ENCODE measurements at regions of chr12 and their contacts with region 1.

Region 1: GRCh38 chr12:56206457-56207166 is 15.1 kb downstream of the RNF41 start:
- DNase-seq: no peak
- ATAC-seq: peak; percentile 95
- H3K4me3 ChIP-seq: no peak overlapping the region
- H3K27ac ChIP-seq: no peak overlapping the region
- H3K4me1 ChIP-seq: no peaks in the 10 kb centered on the region
- H3K27me3 ChIP-seq: no peaks in the 10 kb centered on the region
- CTCF ChIP-seq: peak; percentile 67 to 79 (median 75)
- EP300 ChIP-seq: no peak
- POLR2A ChIP-seq: no peak; the same call in 1 of the 2 replicates
- RAD21 ChIP-seq: peak; percentile 45

Region 2: DNA sequence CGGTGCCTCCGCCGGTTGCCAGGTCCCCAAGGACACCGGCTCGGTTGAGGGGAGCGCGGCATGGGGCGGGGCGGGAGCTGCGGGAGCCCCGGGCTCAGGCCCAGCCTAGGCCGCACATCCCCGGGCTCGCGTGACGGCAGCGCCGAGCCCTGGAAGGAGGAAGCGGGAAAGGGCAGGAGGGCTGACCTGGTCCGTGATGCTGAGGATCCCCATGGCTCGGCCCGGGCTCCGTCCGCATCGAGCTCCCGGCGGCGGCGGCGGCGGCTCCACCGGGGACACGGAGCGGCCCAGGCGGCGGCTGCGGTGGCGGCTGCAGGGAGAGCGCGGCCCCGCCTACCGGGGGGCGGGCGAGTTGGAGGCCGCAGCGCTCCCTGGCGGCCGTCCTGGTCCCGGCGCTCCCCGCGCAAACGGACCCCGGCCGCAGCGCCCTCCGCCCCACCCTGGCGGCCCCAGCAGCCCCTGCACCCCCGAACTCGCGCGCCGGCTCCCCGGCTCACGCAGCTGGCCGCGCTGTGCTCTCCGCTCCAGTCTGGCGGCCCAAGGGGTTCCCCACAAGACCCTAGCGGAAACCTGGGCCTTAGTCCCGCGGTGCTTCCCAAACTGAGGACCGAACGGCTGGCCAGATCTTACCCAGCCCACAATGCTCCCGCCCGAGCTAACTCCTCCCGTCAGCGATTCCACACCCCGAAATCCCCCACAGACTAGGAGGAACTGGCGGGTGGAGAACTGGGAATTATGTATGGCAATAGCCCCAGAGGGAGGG is 51.6 kb after region 1 on chr12 and contains the start of gene ANKRD52:
- CTCF ChIA-PET with region 1: interaction called, 13 read pairs
- POLR2A ChIA-PET with region 1: no interaction called
- RAD21 ChIA-PET with region 1: interaction called, 12 read pairs
- SMC1A ChIA-PET with region 1: interaction called, 4 read pairs
- in situ Hi-C with region 1: no loop called
- intact Hi-C with region 1: no loop called
- DNase-seq: no peak
- ATAC-seq: peak; percentile 98
- H3K4me3 ChIP-seq: peak within 1 kb of the TSS; percentile 95
- H3K27ac ChIP-seq: peak within 1 kb of the TSS; percentile 73
- H3K4me1 ChIP-seq: peaks cover 7% of the 10 kb centered on the region
- H3K27me3 ChIP-seq: no peaks in the 10 kb centered on the region
- CTCF ChIP-seq: peak; percentile 54 to 84 (median 57); a peak in 5 of 6 replicates
- EP300 ChIP-seq: 0 out of 4 replicates have a peak, but pooled peaks of 1 of the 2 experiments have one; percentile 12
- POLR2A ChIP-seq: peak; percentile 71
- RAD21 ChIP-seq: no peak
- polyA plus RNA-seq, gene ANKRD52: 0.90 to 1.2 TPM

Region 3: GRCh38 chr12:56884421-56884820 is 677.8 kb after region 1 on chr12:
- CTCF ChIA-PET with region 1: no interaction called
- POLR2A ChIA-PET with region 1: no interaction called
- RAD21 ChIA-PET with region 1: no interaction called
- SMC1A ChIA-PET with region 1: no interaction called
- in situ Hi-C with region 1: no loop called
- intact Hi-C with region 1: no loop called
- DNase-seq: no peak
- ATAC-seq: no peak
- H3K4me3 ChIP-seq: no peak overlapping the region
- H3K27ac ChIP-seq: no peak overlapping the region
- H3K4me1 ChIP-seq: no peaks in the 10 kb centered on the region
- H3K27me3 ChIP-seq: no peaks in the 10 kb centered on the region
- CTCF ChIP-seq: no peak
- EP300 ChIP-seq: no peak
- POLR2A ChIP-seq: no peak
- RAD21 ChIP-seq: no peak